ENCODE measurements at regions of chr7 and their contacts with region 1.

Region 1: GRCh38 chr7:24819916-24820689 is 62.8 kb upstream of the GSDME start:
- DNase-seq: peak; percentile 89
- H3K4me3 Mint-ChIP-seq: peak overlapping the region; percentile 63
- H3K27ac Mint-ChIP-seq: peak overlapping the region; percentile 91
- H3K4me1 Mint-ChIP-seq: peaks cover 21% of the 10 kb centered on the region
- H3K27me3 Mint-ChIP-seq: no peaks in the 10 kb centered on the region

Region 2: GRCh38 chr7:24877790-24878311 is 57.7 kb after region 1 on chr7:
- CTCF ChIA-PET with region 1: interaction called, 11 read pairs
- intact Hi-C with region 1: loop called (anchors 1 kb)
- DNase-seq: peak; percentile 53
- H3K4me3 Mint-ChIP-seq: no peak overlapping the region
- H3K27ac Mint-ChIP-seq: no peak overlapping the region
- H3K4me1 Mint-ChIP-seq: peaks cover 52% of the 10 kb centered on the region
- H3K27me3 Mint-ChIP-seq: no peaks in the 10 kb centered on the region

Region 3: DNA sequence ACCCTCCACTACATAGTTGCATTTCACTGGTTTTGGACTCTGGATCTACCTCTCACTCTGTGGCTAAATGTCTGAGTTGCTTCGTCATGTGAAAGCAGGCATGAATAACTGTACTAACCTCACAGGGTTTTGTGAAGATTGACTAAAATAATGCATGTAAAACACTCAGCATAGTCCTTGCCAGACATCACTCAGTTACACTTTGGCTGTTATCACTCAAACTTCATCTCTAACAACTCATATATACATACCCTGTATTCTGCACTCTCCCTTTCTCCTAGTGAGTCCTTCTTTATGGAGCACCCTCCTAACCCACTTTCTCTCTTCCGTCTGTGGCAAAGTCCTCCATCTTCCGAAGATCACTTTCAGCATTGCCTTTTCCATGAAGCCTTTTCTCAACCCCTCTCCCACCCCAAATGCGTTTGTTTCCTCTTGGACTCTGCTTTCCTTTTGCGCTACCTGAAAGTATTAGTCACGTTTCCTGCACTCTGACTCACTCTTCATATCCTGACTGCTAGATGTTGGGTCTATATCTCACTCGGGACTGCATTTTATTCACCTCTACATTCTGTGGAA is 87.3 kb after region 1 on chr7:
- CTCF ChIA-PET with region 1: interaction called, 4 read pairs
- intact Hi-C with region 1: loop called (anchors 1 kb)
- DNase-seq: peak; percentile 48
- H3K4me3 Mint-ChIP-seq: no peak overlapping the region
- H3K27ac Mint-ChIP-seq: no peak overlapping the region
- H3K4me1 Mint-ChIP-seq: peaks cover 34% of the 10 kb centered on the region
- H3K27me3 Mint-ChIP-seq: no peaks in the 10 kb centered on the region

Region 4: DNA sequence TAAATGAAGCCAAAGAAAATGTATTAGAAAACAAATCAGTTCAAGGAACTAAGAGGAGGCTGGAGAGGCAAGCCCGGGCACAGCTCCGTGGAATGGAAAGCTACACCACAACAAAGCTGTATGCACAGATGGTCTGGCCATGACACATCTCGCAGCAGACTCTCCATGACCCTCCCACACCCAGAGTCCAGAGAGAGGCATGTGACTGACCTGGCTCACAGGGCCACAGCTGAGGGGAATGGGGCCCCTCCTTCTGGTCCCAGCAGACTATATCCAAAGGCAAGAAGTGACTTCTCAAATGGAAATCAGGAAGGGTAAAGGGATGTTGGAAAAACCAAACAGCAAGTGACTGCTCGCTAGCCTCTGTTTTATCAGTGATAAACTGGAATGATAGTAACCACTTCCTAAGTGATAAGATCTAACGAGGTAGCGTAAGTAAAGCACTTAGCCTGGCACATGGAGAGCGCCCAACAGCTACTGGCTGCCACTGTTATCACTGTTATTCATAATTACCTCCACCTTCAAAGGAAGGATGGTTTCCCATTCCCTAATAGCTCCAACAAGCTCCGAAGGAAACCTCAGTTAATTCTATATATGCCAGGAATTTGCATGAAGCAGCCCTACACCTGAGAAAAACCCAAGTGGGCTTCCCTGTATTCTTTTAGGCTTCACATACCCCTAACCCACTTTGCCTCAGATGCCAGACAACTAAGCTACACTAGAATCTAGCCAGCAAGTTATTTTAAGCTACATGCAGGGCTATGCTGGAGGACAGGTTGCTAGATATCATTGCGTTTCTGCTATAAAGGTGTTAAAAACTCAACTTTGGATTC is 151.4 kb after region 1 on chr7:
- CTCF ChIA-PET with region 1: interaction called, 13 read pairs
- intact Hi-C with region 1: loop called (anchors 1 kb)
- DNase-seq: peak; percentile 22
- H3K4me3 Mint-ChIP-seq: peak overlapping the region; percentile 7
- H3K27ac Mint-ChIP-seq: peak overlapping the region; percentile 71
- H3K4me1 Mint-ChIP-seq: peaks cover 72% of the 10 kb centered on the region
- H3K27me3 Mint-ChIP-seq: no peaks in the 10 kb centered on the region

Region 5: GRCh38 chr7:25069900-25070443 is 249.9 kb after region 1 on chr7:
- CTCF ChIA-PET with region 1: interaction called, 32 read pairs
- intact Hi-C with region 1: loop called (anchors 1 kb)
- DNase-seq: peak; percentile 57
- H3K4me3 Mint-ChIP-seq: no peak overlapping the region
- H3K27ac Mint-ChIP-seq: no peak overlapping the region
- H3K4me1 Mint-ChIP-seq: peaks cover 6% of the 10 kb centered on the region
- H3K27me3 Mint-ChIP-seq: no peaks in the 10 kb centered on the region

Region 6: DNA sequence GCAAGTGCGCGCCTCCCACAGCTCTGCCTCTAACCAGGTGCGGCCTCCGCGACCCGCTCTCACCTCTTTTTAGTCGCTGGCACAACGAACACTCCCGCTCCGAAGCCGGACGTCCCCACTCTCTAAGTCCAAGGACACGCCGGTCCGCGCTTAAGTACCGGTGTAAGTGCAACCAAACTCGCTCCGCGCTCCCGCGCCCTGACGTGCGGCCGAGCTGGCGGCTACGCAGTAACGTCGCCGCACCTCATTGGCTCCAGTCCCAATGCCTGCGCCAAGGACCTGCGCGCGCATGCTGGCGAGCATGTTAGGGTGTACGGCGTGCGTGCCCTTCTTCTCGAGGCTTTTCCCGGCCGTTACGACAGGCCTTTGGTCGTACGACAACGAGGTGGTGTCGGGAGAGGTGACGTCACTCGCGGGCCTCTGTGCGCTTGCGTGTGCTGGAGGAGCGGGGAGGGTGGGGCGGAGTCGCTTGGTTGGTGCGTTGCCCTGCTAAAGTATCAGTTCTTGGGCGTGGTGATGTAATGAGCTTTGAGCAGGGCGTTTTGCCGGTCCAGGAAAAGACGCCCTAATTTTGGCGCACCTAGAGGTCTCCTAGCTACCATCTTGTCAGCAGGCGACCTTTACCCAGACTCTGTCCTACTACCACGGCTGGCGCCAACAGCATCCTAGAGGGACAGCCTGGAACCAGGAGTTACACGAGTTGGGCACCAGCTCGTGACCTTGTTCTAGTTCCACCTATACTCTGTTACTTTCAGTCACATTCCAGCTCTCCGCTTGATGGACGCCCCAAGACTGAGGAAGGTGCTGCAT is 305.2 kb after region 1 on chr7 and contains the start of gene CYCS:
- CTCF ChIA-PET with region 1: interaction called, 4 read pairs
- intact Hi-C with region 1: loop called (anchors 1 kb)
- DNase-seq: peak; percentile 100
- H3K4me3 Mint-ChIP-seq: peak within 1 kb of the TSS; percentile 93
- H3K27ac Mint-ChIP-seq: peak within 1 kb of the TSS; percentile 98
- H3K4me1 Mint-ChIP-seq: peaks cover 31% of the 10 kb centered on the region
- H3K27me3 Mint-ChIP-seq: no peaks in the 10 kb centered on the region
- total RNA-seq, gene CYCS: 213 to 224 TPM